Activated CD4-positive, alpha-beta T cell treated with anti-CD3 and anti-CD28 coated beads, Interleukin-2, amount 10 ng/mL, durations not matched to agents 24 days and 14 days (primary cell): ENCODE measurements at regions of chr19 and their contacts with region 1.

Region 1: DNA sequence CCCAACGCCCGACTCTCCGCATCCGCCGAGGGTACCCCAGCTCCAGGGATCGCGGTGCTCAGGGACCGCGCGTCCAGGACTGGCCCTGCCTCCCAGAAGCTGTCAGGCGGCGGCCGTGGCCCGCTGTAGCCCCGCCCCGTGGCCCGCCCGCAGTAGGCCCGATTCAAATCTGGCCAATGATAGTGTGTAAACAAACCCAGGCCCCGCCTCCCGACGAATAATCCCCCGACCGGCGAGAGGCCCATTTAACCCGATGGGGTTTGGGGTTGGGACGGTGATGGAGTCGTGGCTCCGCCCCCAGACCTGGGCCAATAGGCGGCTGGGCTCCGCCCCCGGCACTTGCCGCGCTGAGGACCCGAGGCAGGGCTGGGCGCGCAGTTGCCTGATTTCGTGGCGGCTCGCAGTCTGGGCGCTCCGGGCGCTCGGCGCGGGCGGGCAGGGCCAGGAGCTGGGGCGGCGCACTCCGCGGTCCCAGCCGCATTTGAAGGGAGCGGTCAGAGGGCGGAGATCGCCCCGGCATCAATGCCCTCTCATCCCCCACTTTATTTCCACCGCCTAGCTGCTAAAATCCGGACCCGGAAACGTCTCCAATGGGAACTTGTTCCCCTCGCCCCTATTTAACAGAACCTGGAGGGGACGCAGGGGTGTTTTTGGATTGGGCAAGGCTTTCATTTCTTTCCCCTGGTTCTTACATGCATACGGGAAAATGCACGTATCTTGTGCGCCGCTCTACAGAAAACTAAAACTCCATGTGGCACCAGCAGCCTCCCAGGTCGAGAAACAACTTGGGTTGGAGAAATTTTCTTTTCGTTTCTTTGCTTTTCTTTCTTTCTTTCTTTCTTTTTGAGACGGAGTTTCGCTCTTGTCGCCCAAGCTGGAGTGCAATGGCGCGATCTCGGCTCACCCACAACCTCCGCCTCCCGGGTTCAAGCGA is 8.4 kb upstream of the BICRA start:
- DNase-seq: peak; percentile 99
- H3K4me3 Mint-ChIP-seq: peak overlapping the region; percentile 91
- H3K27ac Mint-ChIP-seq: peak overlapping the region; percentile 88
- H3K4me1 Mint-ChIP-seq: peaks cover 29% of the 10 kb centered on the region
- H3K27me3 Mint-ChIP-seq: peaks cover 3% of the 10 kb centered on the region

Region 2: DNA sequence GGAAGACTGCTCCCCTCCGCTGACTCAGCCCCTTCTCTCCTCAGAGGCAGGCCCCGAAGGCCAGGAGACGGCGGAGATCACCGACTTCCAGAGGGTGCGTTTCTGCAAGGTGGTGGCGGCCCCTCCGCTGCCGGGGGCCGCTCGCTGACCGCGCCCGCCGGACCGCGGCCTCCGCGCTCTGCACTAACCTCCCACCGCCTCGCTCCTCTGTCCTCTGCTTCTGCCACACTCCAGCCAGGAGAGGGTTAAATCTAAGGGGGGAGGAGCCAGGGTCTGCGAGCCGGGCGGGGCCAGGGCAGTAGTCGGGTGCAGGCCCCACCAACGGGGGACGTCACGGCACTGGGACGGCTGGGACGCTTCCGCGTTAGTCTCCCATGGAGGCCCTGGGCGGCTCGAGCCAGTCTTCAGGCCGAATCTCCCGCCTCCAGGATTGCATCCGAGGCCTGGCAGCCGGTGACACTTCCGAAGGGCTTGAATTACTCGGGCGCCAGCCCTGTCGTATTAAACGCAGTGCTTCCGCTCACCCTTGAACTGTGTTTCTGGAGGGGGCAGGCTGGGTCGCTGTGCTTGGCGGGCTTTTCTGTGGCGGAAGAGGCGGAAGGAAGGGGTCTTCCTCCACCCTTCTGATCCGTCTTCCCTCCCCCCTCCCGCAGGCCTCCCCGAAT is 327.1 kb before region 1 on chr19:
- intact Hi-C with region 1: loop called (anchors 10 kb)
- DNase-seq: peak; percentile 98
- H3K4me3 Mint-ChIP-seq: peak overlapping the region; percentile 97
- H3K27ac Mint-ChIP-seq: peak overlapping the region; percentile 99
- H3K4me1 Mint-ChIP-seq: peaks cover 41% of the 10 kb centered on the region
- H3K27me3 Mint-ChIP-seq: no peaks in the 10 kb centered on the region

Region 3: GRCh38 chr19:47483800-47484690 is 116.5 kb before region 1 on chr19 and contains the start of gene KPTN:
- intact Hi-C with region 1: loop called (anchors 10 kb)
- DNase-seq: peak; percentile 97
- H3K4me3 Mint-ChIP-seq: peak within 1 kb of the TSS; percentile 99
- H3K27ac Mint-ChIP-seq: peak within 1 kb of the TSS; percentile 98
- H3K4me1 Mint-ChIP-seq: peaks cover 21% of the 10 kb centered on the region
- H3K27me3 Mint-ChIP-seq: no peaks in the 10 kb centered on the region
- total RNA-seq, gene KPTN: 10.1 and 12.2 TPM in 2 replicates

Region 4: GRCh38 chr19:47697863-47698609 is 97.5 kb after region 1 on chr19:
- intact Hi-C with region 1: loop called (anchors 5 kb)
- DNase-seq: peak; percentile 87
- H3K4me3 Mint-ChIP-seq: no peak overlapping the region
- H3K27ac Mint-ChIP-seq: no peak overlapping the region
- H3K4me1 Mint-ChIP-seq: no peaks in the 10 kb centered on the region
- H3K27me3 Mint-ChIP-seq: no peaks in the 10 kb centered on the region